ENCODE measurements at regions of chr6 and their contacts with region 1.

Region 1: GRCh38 chr6:159042003-159042825 is 2.6 kb downstream of the TAGAP start:
- DNase-seq: peak; percentile 62
- CTCF ChIP-seq: peak; percentile 98

Region 2: GRCh38 chr6:159056003-159056402 is 13.8 kb after region 1 on chr6:
- CTCF ChIA-PET with region 1: interaction called, 23 read pairs
- POLR2A ChIA-PET with region 1: no interaction called
- DNase-seq: no peak
- CTCF ChIP-seq: no peak

Region 3: DNA sequence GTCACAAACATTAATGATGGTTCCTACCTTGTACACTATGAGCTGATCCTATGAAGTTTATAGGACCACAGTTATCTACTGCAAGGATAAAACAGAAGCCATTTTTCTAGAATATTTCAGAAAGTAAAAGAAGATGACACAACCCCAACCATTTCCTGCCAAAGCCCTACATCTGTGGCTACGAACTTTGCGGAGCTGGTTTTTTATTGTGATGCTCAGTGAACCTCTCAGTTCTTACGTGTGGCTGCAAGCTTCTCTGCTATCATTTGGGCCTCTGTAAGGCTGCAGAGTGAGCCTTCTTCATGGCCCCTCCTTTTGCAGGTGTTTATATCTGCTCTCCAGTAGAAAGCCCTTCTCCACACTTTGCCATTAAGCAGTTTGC is 20.3 kb after region 1 on chr6:
- CTCF ChIA-PET with region 1: interaction called, 12 read pairs
- POLR2A ChIA-PET with region 1: no interaction called
- DNase-seq: peak; percentile 30
- CTCF ChIP-seq: no peak

Region 4: GRCh38 chr6:159098636-159099106 is 56.5 kb after region 1 on chr6:
- CTCF ChIA-PET with region 1: interaction called, 198 read pairs
- POLR2A ChIA-PET with region 1: interaction called, 4 read pairs
- DNase-seq: peak; percentile 48
- CTCF ChIP-seq: no peak